Activated CD4-positive, alpha-beta memory T cell treated with anti-CD3 and anti-CD28 coated beads, Interleukin-2, amount 10 ng/mL, durations not matched to agents 7 days and 5 days (primary cell): ENCODE measurements at regions of chr7 and their contacts with region 1.

Region 1: GRCh38 chr7:102404005-102404861 is 8.1 kb downstream of the PRKRIP1 start:
- DNase-seq: peak; percentile 57
- H3K4me3 Mint-ChIP-seq: no peak overlapping the region
- H3K27ac Mint-ChIP-seq: peak overlapping the region; percentile 6
- H3K4me1 Mint-ChIP-seq: peaks cover 23% of the 10 kb centered on the region
- H3K27me3 Mint-ChIP-seq: no peaks in the 10 kb centered on the region

Region 2: GRCh38 chr7:102287111-102287980 is 116.9 kb before region 1 on chr7:
- CTCF ChIA-PET with region 1: no interaction called
- POLR2A ChIA-PET with region 1: no interaction called
- DNase-seq: no peak
- H3K4me3 Mint-ChIP-seq: peak overlapping the region; percentile 57
- H3K27ac Mint-ChIP-seq: no peak overlapping the region
- H3K4me1 Mint-ChIP-seq: peaks cover 29% of the 10 kb centered on the region
- H3K27me3 Mint-ChIP-seq: peaks cover 30% of the 10 kb centered on the region

Region 3: DNA sequence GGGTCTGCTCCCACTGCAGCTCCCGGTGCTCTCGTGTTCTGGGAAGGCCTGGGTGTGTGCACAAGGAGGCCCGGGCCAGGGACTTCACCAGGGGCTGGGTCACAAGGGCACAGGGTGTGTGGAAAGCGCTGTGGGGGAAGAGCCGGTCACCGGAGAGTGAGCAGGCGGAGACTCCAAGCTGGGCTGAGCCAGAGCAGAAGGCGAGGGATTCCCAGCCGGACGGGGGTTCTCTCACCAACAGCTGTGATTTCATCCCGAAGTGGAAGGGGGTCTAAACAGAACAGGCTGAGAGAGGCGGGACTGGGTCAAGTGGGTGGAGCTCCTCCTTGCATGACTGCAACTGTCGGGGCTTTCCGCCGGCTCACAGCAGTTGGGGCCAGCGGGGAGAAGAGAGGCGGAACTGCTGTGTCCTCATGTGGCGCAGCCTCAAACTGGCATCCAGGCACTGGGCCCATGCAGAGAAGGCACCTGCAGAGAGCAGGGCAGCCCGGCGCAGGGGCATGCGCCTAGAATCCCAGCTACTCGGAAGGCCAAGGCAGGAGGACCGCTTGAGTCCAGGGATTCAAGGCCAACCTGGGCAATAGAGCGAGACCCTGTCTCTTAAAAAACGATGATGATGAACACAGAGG is 21.5 kb after region 1 on chr7:
- CTCF ChIA-PET with region 1: interaction called, 10 read pairs
- POLR2A ChIA-PET with region 1: interaction called, 226 read pairs
- DNase-seq: peak; percentile 88
- H3K4me3 Mint-ChIP-seq: peak overlapping the region; percentile 78
- H3K27ac Mint-ChIP-seq: peak overlapping the region; percentile 98
- H3K4me1 Mint-ChIP-seq: peaks cover 68% of the 10 kb centered on the region
- H3K27me3 Mint-ChIP-seq: no peaks in the 10 kb centered on the region

Region 4: DNA sequence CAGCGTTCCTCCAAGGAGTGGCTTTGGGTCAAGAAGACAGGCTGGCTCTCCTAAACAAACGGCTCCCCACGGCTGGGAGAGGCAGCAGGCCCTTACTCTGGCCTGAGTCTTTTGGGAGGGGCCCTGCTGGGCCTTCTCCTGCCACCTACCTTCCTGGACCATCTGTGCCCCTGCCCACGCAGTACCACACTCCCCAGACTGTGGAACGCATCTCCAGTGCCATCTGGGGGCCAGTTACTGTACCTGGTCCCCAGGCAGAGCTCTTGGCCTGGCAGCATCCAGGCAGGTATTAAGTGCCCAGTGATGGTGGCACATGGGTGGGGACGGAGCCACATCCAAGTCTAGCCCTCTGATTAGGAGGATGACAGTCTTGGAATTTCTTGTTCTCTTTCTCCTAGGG is 46.0 kb after region 1 on chr7:
- CTCF ChIA-PET with region 1: interaction called, 33 read pairs
- POLR2A ChIA-PET with region 1: no interaction called
- DNase-seq: peak; percentile 48
- H3K4me3 Mint-ChIP-seq: no peak overlapping the region
- H3K27ac Mint-ChIP-seq: no peak overlapping the region
- H3K4me1 Mint-ChIP-seq: no peaks in the 10 kb centered on the region
- H3K27me3 Mint-ChIP-seq: no peaks in the 10 kb centered on the region

Region 5: DNA sequence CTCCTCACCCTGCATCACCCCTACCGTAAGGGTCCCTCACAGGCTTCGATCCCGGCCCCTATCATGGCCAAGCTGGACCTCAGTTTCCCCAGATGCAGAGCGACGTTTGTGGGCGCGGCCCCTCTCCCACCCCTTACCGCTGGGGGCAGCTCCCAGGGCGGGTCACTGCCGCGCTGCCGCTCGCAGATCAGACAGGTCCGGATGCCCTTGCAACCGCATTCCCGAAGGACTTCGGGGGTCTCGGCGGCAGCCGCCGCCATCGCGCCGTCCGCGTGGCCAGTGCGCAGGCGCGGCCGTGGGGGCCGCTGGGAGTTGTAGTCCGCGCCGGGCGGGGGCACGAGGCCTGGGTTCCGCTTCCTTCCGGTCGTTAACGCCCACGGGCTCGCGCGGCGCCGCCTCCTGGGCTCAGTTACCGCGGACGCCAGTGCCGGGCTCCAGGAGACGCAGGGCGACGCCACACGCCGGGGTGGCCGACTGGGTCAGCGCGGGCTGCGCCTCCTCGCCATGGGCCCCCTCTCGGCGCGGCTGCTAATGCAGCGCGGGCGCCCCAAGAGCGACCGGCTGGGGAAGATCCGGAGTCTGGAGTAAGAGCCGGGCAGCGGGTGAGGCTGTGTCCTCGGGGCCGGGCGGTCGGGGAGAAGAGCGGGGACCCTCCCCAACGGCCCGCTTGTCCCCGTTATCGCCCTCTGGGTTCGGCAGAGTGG is 60.5 kb after region 1 on chr7 and contains the starts of genes ALKBH4 and LRWD1:
- CTCF ChIA-PET with region 1: interaction called, 22 read pairs
- POLR2A ChIA-PET with region 1: interaction called, 4 read pairs
- DNase-seq: peak; percentile 94
- H3K4me3 Mint-ChIP-seq: peak within 1 kb of the TSS; percentile 96
- H3K27ac Mint-ChIP-seq: peak within 1 kb of the TSS; percentile 80
- H3K4me1 Mint-ChIP-seq: peaks cover 29% of the 10 kb centered on the region
- H3K27me3 Mint-ChIP-seq: no peaks in the 10 kb centered on the region
- total RNA-seq, gene ALKBH4: 9.4 to 10.4 TPM
- total RNA-seq, gene LRWD1: 19.5 to 19.8 TPM